Pancreas (tissue), 10 donors: ENCODE measurements at regions of chr2 and their contacts with region 1.

Region 1: GRCh38 chr2:134460583-134460998 is 206.7 kb downstream of the MGAT5 start:
- DNase-seq: peak; percentile 69 to 91 (median 80)
- ATAC-seq: peak; percentile 82 to 94 (median 92)
- H3K4me3 ChIP-seq: no peak overlapping the region
- H3K27ac ChIP-seq: peak overlapping the region in 2 of 4 donors; percentile 17 to 33
- H3K4me1 ChIP-seq: peaks cover 0 to 4% (median 4%) of the 10 kb centered on the region in 3 donors
- H3K27me3 ChIP-seq: no peaks in the 10 kb centered on the region
- CTCF ChIP-seq: peak; percentile 34 to 67 (median 54)

Region 2: DNA sequence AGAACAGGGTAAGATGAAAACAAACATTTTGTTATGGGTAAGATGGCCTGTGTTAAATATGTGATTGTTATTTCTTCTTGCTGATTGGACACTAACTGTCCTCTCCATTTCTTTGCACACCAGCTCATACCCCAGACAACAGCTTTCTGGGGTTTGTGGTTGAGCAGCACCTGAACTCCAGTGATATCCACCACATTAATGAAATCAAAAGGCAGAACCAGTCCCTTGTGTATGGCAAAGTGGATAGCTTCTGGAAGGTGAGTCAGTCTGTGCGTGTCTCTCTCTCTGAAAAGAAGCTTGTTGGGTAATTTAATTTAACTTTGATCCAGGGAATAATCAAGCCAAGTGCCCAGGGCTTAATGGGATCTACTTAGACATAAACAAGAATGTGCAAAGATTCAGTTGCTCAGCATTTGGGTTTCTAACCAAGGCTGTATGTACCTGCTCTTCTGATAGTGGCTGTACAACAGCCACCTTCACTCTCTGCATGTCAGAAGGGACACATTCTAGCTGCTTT is 98.4 kb before region 1 on chr2:
- intact Hi-C with region 1: no loop called
- DNase-seq: no peak
- ATAC-seq: no peak
- H3K4me3 ChIP-seq: no peak overlapping the region
- H3K27ac ChIP-seq: peak overlapping the region in 1 of 4 donors; percentile 44
- H3K4me1 ChIP-seq: no peaks in the 10 kb centered on the region
- H3K27me3 ChIP-seq: no peaks in the 10 kb centered on the region
- CTCF ChIP-seq: no peak

Region 3: DNA sequence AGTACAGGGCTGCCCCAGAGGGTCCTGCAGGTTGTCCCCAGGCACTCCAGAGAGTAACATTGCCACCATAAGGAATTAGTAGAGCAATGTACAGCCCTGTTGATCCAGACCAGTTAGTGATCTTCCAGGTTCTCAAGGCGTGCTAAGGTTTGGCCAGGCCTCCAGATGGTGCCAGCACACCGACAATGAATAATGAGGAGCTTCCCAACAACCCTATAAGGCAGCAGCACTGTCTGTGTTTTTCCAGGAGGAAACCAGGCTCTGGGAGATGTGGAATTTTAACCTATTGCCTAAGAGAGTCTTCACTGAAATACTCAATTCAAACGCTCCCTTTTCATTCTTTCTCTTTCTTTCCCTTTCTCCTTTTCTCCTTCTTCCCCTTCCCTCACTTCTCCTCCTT is 84.7 kb before region 1 on chr2:
- intact Hi-C with region 1: loop called in 1 of 3 experiments (anchors 10 kb)
- DNase-seq: peak in 4 of 6 donors; percentile 29 to 68 (median 39)
- ATAC-seq: peak; percentile 85 to 94 (median 89)
- H3K4me3 ChIP-seq: no peak overlapping the region
- H3K27ac ChIP-seq: no peak overlapping the region
- H3K4me1 ChIP-seq: no peaks in the 10 kb centered on the region
- H3K27me3 ChIP-seq: no peaks in the 10 kb centered on the region
- CTCF ChIP-seq: no peak

Region 4: DNA sequence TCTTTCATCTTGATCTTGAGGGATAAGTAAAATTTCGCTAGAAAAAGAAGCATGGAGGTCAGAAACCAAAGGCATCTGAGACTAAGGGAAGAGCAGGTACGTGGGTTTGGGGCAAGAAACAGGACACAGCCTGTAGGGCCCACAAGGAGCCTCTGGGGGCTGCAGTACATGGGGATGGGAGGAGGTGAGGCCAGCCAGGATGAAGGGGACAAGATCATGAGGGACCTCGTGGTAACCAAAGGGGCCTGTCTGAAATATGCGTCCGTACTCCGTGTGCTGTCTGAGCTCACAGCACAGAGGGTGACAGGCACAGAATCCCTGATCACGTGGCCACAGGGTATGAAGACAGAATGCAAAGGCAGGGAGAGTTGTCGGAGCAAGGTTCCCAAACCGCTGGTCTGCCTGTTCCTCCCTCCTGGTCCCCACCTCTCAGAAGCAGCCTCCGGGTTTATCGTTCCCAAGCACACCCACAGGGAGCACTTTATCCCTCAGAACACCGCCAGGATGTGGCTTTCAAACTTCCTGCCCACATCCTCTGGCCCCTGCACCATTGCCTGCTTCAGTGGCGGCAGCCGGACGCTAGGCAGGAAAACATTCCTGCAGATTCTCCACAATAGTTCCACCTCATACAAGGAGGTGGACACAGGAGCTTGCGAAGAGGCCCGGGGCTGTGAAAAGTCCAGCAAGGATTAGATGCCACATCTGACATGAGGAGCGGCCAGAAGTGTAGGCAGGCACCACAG is 246.2 kb after region 1 on chr2:
- intact Hi-C with region 1: loop called in 1 of 3 experiments (anchors 10 kb)
- DNase-seq: no peak
- ATAC-seq: peak; percentile 16 to 34 (median 23)
- H3K4me3 ChIP-seq: no peak overlapping the region
- H3K27ac ChIP-seq: no peak overlapping the region
- H3K4me1 ChIP-seq: peaks cover 7 to 16% (median 15%) of the 10 kb centered on the region in 3 donors
- H3K27me3 ChIP-seq: no peaks in the 10 kb centered on the region
- CTCF ChIP-seq: no peak

Region 5: GRCh38 chr2:134900151-134900550 is 439.6 kb after region 1 on chr2:
- intact Hi-C with region 1: loop called in 2 of 3 experiments (anchors 5 to 10 kb)
- DNase-seq: no peak
- ATAC-seq: no peak
- H3K4me3 ChIP-seq: no peak overlapping the region
- H3K27ac ChIP-seq: no peak overlapping the region
- H3K4me1 ChIP-seq: peaks cover 11 to 29% (median 18%) of the 10 kb centered on the region in 3 donors
- H3K27me3 ChIP-seq: no peaks in the 10 kb centered on the region
- CTCF ChIP-seq: no peak

Region 6: DNA sequence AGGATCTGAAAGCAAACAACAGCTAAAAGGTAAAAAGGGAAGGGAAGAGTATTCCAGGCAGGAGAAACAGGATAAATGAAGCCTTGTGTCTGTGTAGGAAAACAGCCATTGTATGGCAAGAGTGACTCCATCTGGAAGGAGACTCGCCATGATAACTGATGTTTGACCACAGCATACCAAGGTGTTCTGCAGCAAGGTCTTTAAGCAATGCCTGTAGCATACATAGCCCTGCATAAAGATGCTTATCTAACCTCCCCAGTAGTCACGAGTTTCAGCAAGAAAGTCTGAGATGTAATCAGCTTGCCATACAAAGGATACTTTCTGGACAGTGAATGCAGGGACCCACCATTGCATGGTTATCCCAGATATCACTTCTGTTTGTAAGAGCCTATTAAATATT is 446.1 kb after region 1 on chr2:
- intact Hi-C with region 1: loop called in 2 of 3 experiments (anchors 5 to 10 kb)
- DNase-seq: no peak
- ATAC-seq: no peak
- H3K4me3 ChIP-seq: no peak overlapping the region
- H3K27ac ChIP-seq: no peak overlapping the region
- H3K4me1 ChIP-seq: no peaks in the 10 kb centered on the region
- H3K27me3 ChIP-seq: no peaks in the 10 kb centered on the region
- CTCF ChIP-seq: no peak